Breast epithelium (tissue), 4 donors: ENCODE measurements at regions of chr20 and their contacts with region 1.

Region 1: GRCh38 chr20:41411391-41411847 is 44.8 kb upstream of the EMILIN3 start:
- DNase-seq: no peak
- H3K4me3 ChIP-seq: no peak overlapping the region
- H3K27ac ChIP-seq: peak overlapping the region; percentile 57 to 70
- H3K4me1 ChIP-seq: peaks cover 3 to 12% of the 10 kb centered on the region in 2 donors
- H3K27me3 ChIP-seq: no peaks in the 10 kb centered on the region
- CTCF ChIP-seq: peak; percentile 16 to 46 (median 44)
- POLR2A ChIP-seq: no peak

Region 2: GRCh38 chr20:40617594-40617993 is 793.8 kb before region 1 on chr20:
- intact Hi-C with region 1: no loop called
- DNase-seq: no peak
- H3K4me3 ChIP-seq: no peak overlapping the region
- H3K27ac ChIP-seq: no peak overlapping the region
- H3K4me1 ChIP-seq: no peaks in the 10 kb centered on the region
- H3K27me3 ChIP-seq: no peaks in the 10 kb centered on the region
- CTCF ChIP-seq: no peak
- POLR2A ChIP-seq: no peak

Region 3: GRCh38 chr20:41339507-41340326 is 71.7 kb before region 1 on chr20:
- intact Hi-C with region 1: loop called (anchors 10 kb)
- DNase-seq: peak; percentile 89 to 93
- H3K4me3 ChIP-seq: peak overlapping the region; percentile 47 to 73 (median 58)
- H3K27ac ChIP-seq: peak overlapping the region; percentile 88 to 94
- H3K4me1 ChIP-seq: peaks cover 3 to 21% of the 10 kb centered on the region in 2 donors
- H3K27me3 ChIP-seq: no peaks in the 10 kb centered on the region
- CTCF ChIP-seq: peak; percentile 99 to 100 (median 99)
- POLR2A ChIP-seq: no peak